Activated CD4-positive, alpha-beta memory T cell treated with anti-CD3 and anti-CD28 coated beads, Interleukin-2, amount 10 ng/mL, durations not matched to agents 7 days and 5 days (primary cell): ENCODE measurements at regions of chr1 and their contacts with region 1.

Region 1: GRCh38 chr1:77759071-77760028 is at the start of gene USP33:
- DNase-seq: peak; percentile 90
- H3K4me3 Mint-ChIP-seq: peak within 1 kb of the TSS; percentile 94
- H3K27ac Mint-ChIP-seq: peak within 1 kb of the TSS; percentile 91
- H3K4me1 Mint-ChIP-seq: peaks cover 31% of the 10 kb centered on the region
- H3K27me3 Mint-ChIP-seq: peaks cover 2% of the 10 kb centered on the region
- total RNA-seq, gene USP33: 50.5 to 56.7 TPM

Region 2: GRCh38 chr1:77706321-77706720 is 53.0 kb before region 1 on chr1:
- CTCF ChIA-PET with region 1: no interaction called
- POLR2A ChIA-PET with region 1: no interaction called
- DNase-seq: no peak
- H3K4me3 Mint-ChIP-seq: no peak overlapping the region
- H3K27ac Mint-ChIP-seq: no peak overlapping the region
- H3K4me1 Mint-ChIP-seq: peaks cover 3% of the 10 kb centered on the region
- H3K27me3 Mint-ChIP-seq: no peaks in the 10 kb centered on the region

Region 3: DNA sequence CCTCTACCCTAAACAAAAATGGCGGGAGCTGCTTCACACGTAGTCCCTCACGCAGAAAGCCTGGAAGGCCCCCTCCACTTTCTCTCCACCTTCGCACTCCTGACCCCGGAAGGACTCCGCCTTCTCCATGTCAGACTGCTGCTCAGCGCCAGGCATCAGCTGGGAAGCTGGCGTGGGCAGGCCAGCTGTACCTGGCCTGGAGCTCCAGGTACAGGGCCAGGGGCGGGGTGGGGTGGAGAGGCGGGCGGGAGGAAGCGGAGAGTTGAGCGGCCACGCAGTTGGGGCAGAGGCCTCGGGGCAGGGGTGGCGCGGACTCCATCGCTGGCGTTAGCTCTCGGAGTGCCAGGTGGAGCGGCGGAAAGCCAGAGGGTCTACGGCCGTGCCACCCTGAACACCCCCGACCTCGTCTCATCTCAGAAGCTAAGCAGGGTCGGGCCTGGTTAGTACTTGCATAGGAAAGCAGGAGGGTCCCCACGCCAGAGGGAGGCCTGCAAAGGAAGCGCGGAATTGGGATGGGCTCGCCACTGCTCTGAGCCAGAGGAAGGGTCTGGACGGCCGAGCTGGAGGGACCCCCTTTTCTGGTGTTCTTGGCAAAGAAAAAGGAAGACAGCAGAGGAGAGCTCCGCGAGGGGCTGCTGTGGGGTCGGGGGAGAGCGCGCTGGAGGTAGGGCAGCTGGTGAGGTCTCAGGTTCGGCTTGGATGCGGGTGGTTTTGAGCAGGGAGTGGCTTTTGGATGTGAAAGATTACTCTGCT is 20.4 kb after region 1 on chr1 and contains the start of gene MIGA1:
- CTCF ChIA-PET with region 1: no interaction called
- POLR2A ChIA-PET with region 1: interaction called, 18 read pairs
- DNase-seq: peak; percentile 88
- H3K4me3 Mint-ChIP-seq: peak within 1 kb of the TSS; percentile 89
- H3K27ac Mint-ChIP-seq: peak within 1 kb of the TSS; percentile 73
- H3K4me1 Mint-ChIP-seq: peaks cover 36% of the 10 kb centered on the region
- H3K27me3 Mint-ChIP-seq: no peaks in the 10 kb centered on the region
- total RNA-seq, gene MIGA1: 11.5 to 12.8 TPM